Vagina (tissue), 2 donors: ENCODE measurements at regions of chr13 and their contacts with region 1.

Region 1: DNA sequence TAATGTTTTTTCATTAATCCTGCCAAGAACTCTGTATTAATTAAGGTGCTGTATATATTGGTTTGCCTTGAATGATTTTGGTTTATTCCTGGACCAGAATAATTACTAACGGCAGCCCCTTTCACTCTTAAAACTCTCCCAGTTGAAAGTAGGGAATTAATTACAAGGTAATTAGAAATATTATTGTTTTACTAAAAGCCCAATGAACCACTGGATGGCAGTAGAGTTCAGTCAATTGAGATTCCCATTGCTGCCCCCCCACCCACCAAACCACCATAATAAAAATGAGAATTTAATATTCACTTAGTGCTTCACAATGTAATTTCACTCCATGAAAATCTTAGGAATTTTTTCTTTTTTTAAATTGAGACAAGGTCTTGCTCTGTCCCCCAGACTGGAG is 13.7 kb downstream of the WBP4 start:
- DNase-seq: no peak
- H3K4me3 ChIP-seq: no peak overlapping the region
- H3K27ac ChIP-seq: no peak overlapping the region
- H3K4me1 ChIP-seq: no peaks in the 10 kb centered on the region
- H3K27me3 ChIP-seq: no peaks in the 10 kb centered on the region
- CTCF ChIP-seq: peak; percentile 20 to 56 (median 42)
- POLR2A ChIP-seq: no peak

Region 2: DNA sequence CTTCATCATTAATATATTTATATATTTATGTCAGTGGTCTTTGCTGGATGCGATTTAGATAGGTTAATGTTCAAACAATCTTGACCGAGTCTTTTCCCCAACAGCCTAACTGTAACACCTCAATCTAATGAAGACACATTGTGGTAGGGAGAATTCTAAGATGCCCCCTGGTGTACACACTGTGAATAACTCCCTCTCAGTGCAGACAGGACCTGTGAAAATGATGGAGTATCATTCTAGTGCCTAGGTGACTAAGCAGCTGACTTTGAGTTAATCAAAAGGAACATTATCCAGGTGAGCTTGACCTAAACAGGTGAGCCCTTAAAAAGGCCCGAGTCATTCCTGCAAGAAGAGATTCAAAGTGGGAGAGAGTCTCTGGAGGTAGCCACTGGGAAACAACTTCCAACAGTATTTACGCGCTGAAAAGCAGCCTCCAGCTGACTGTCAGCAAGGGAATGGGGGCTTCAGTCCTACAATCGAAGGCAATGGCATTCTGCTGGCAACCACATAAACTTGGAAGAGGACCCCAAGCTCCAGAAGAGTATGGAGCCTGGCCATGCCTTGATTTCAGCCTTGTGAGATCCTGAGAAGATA is 147.3 kb after region 1 on chr13:
- intact Hi-C with region 1: loop called (anchors 10 kb)
- DNase-seq: no peak
- H3K4me3 ChIP-seq: no peak overlapping the region
- H3K27ac ChIP-seq: no peak overlapping the region
- H3K4me1 ChIP-seq: no peaks in the 10 kb centered on the region
- H3K27me3 ChIP-seq: no peaks in the 10 kb centered on the region
- CTCF ChIP-seq: peak; percentile 48 to 72 (median 57)
- POLR2A ChIP-seq: no peak

Region 3: GRCh38 chr13:41465241-41465847 is 390.3 kb after region 1 on chr13:
- intact Hi-C with region 1: no loop called
- DNase-seq: no peak
- H3K4me3 ChIP-seq: no peak overlapping the region
- H3K27ac ChIP-seq: peak overlapping the region; percentile 49
- H3K4me1 ChIP-seq: peaks cover 13% of the 10 kb centered on the region
- H3K27me3 ChIP-seq: no peaks in the 10 kb centered on the region
- CTCF ChIP-seq: no peak
- POLR2A ChIP-seq: no peak

Region 4: GRCh38 chr13:42985312-42986175 is 1910.5 kb after region 1 on chr13:
- intact Hi-C with region 1: no loop called
- DNase-seq: peak in 1 of 2 donors; percentile 87
- H3K4me3 ChIP-seq: no peak overlapping the region
- H3K27ac ChIP-seq: peak overlapping the region; percentile 66
- H3K4me1 ChIP-seq: peaks cover 21% of the 10 kb centered on the region
- H3K27me3 ChIP-seq: no peaks in the 10 kb centered on the region
- CTCF ChIP-seq: no peak
- POLR2A ChIP-seq: no peak